ENCODE measurements at regions of chr5 and their contacts with region 1.

Region 1: DNA sequence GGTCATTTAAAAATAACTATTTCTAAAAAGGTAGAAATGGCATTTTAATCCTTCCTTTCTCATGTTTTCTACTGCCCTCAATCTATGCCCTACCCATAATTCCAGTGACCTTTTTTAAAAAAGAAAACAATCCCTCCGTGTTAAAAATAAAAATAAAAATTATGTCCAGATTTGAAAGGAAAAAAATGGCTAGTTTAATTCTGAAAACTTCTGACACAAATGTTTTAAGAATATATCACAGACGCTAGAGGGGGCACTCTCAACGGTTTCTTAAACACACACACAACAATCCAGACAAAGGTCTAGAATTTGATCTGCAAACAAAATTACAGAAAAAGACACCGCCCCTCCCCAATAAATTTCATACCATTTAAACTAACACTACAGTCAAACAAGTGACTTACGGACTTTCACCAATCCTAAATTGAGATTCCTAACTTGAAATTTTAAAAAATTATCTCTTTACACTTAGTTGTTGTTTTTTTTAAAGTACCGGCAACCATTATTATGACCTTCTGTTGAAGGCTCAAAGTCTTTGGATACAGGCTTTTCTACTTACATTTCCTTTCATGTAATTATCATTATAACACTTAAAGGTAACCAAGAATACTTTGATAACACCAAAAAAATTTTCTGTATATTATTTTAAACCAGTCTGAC is 38.2 kb downstream of the CLINT1 start:
- DNase-seq: no peak
- ATAC-seq: peak; percentile 69
- H3K4me3 ChIP-seq: no peak overlapping the region
- H3K27ac ChIP-seq: no peak overlapping the region
- H3K4me1 ChIP-seq: no peaks in the 10 kb centered on the region
- H3K27me3 ChIP-seq: no peaks in the 10 kb centered on the region
- CTCF ChIP-seq: peak; percentile 39 to 56 (median 49); a peak in 5 of 6 replicates
- EP300 ChIP-seq: no peak
- POLR2A ChIP-seq: no peak
- RAD21 ChIP-seq: peak; percentile 63

Region 2: DNA sequence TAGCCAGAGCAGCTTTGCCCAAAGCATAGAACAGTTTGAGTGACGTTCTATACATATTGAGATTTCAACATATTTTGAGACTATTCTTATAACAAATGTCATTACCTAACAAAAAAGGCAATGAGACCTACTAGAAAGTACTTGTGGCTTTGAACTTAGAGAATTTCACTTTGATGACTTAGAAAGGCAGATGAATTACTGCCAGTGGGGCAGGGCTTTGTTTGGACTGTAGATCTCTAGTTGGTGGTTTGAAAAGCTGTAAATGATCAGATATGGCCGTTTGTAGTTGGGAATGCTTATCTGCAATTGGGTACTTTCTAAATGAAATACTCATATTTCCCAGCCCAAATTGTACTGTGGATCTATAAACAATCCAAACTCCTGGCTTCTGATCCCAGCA is 196.6 kb before region 1 on chr5:
- CTCF ChIA-PET with region 1: no interaction called
- POLR2A ChIA-PET with region 1: no interaction called
- RAD21 ChIA-PET with region 1: no interaction called
- SMC1A ChIA-PET with region 1: no interaction called
- in situ Hi-C with region 1: no loop called
- intact Hi-C with region 1: no loop called
- DNase-seq: no peak
- ATAC-seq: no peak; the same call in 2 of the 3 replicates
- H3K4me3 ChIP-seq: no peak overlapping the region
- H3K27ac ChIP-seq: no peak overlapping the region
- H3K4me1 ChIP-seq: no peaks in the 10 kb centered on the region
- H3K27me3 ChIP-seq: no peaks in the 10 kb centered on the region
- CTCF ChIP-seq: no peak
- EP300 ChIP-seq: no peak
- POLR2A ChIP-seq: no peak
- RAD21 ChIP-seq: no peak

Region 3: GRCh38 chr5:157651623-157652549 is 168.8 kb before region 1 on chr5 and contains the start of gene SOX30:
- CTCF ChIA-PET with region 1: no interaction called
- POLR2A ChIA-PET with region 1: no interaction called
- RAD21 ChIA-PET with region 1: no interaction called
- SMC1A ChIA-PET with region 1: no interaction called
- in situ Hi-C with region 1: no loop called
- intact Hi-C with region 1: no loop called
- DNase-seq: peak; percentile 21
- ATAC-seq: peak; percentile 98
- H3K4me3 ChIP-seq: no peak within 1 kb of the TSS; the same call in 1 of the 2 replicates
- H3K27ac ChIP-seq: no peak within 1 kb of the TSS
- H3K4me1 ChIP-seq: no peaks in the 10 kb centered on the region
- H3K27me3 ChIP-seq: no peaks in the 10 kb centered on the region
- CTCF ChIP-seq: peak; percentile 29 to 40 (median 32); a peak in 4 of 6 replicates
- EP300 ChIP-seq: no peak
- POLR2A ChIP-seq: peak; percentile 69
- RAD21 ChIP-seq: peak; percentile 36; the same call in 1 of the 2 replicates
- polyA plus RNA-seq, gene SOX30: 0.06 to 0.07 TPM

Region 4: GRCh38 chr5:157793301-157793700 is 27.4 kb before region 1 on chr5:
- CTCF ChIA-PET with region 1: interaction called, 11 read pairs
- POLR2A ChIA-PET with region 1: no interaction called
- RAD21 ChIA-PET with region 1: no interaction called
- SMC1A ChIA-PET with region 1: interaction called, 3 read pairs
- in situ Hi-C with region 1: no loop called
- intact Hi-C with region 1: no loop called
- DNase-seq: no peak
- ATAC-seq: no peak
- H3K4me3 ChIP-seq: no peak overlapping the region
- H3K27ac ChIP-seq: no peak overlapping the region
- H3K4me1 ChIP-seq: no peaks in the 10 kb centered on the region
- H3K27me3 ChIP-seq: no peaks in the 10 kb centered on the region
- CTCF ChIP-seq: no peak
- EP300 ChIP-seq: no peak
- POLR2A ChIP-seq: no peak
- RAD21 ChIP-seq: no peak

Region 5: DNA sequence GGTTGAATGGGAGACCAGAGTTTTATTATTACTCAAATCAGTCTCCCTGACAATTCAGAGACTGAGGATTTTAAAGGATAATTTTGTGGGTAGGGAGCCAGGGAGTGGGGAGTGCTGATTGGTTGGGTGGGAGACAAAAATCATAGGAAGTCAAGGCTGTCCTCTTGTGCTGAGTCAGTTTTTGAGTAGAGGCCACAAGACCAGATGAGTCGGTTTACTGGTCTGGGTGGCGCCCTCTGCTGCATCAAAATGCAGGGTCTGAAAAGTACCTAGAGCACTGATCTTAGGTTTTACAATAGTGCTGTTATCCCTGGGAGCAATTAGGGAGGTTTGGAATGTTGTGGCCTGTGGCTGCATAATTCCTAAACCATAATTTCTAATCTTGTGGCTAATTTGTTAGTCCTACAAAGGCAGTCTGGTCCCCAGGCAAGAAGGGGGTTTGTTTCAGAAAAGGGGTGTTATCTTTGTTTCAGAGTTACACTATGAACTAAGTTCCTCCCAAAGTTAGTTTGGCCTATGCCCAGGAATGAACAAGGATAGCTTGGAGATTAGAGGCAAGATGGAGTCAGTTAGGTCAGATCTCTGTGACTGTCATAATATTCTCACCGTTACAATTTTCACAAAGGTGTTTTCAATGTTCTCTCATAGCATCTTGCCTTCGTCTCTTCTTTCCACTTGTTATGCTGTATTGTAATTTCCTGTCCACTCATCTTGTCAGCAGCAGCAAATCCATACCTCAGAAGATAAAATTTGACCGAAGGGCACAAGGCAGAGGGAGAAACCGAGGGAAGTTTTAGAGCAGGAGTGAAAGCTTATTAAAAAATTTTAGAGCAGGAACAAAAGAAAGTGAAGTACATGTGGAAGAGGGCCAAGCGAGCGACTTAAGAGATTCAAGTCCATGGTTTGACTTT is 97.4 kb after region 1 on chr5:
- CTCF ChIA-PET with region 1: interaction called, 102 read pairs
- POLR2A ChIA-PET with region 1: no interaction called
- RAD21 ChIA-PET with region 1: interaction called, 11 read pairs
- SMC1A ChIA-PET with region 1: interaction called, 21 read pairs
- in situ Hi-C with region 1: loop called (anchors 5 kb)
- intact Hi-C with region 1: loop called (anchors 1 kb)
- DNase-seq: no peak
- ATAC-seq: peak; percentile 92
- H3K4me3 ChIP-seq: no peak overlapping the region
- H3K27ac ChIP-seq: no peak overlapping the region
- H3K4me1 ChIP-seq: no peaks in the 10 kb centered on the region; the same call in 1 of the 2 replicates
- H3K27me3 ChIP-seq: no peaks in the 10 kb centered on the region
- CTCF ChIP-seq: peak; percentile 64 to 71 (median 65)
- EP300 ChIP-seq: no peak
- POLR2A ChIP-seq: no peak
- RAD21 ChIP-seq: peak; percentile 81

Region 6: GRCh38 chr5:157924931-157925729 is 104.4 kb after region 1 on chr5:
- CTCF ChIA-PET with region 1: interaction called, 102 read pairs
- POLR2A ChIA-PET with region 1: no interaction called
- RAD21 ChIA-PET with region 1: interaction called, 4 read pairs
- SMC1A ChIA-PET with region 1: interaction called, 21 read pairs
- in situ Hi-C with region 1: no loop called
- intact Hi-C with region 1: no loop called
- DNase-seq: no peak
- ATAC-seq: peak; percentile 37
- H3K4me3 ChIP-seq: no peak overlapping the region
- H3K27ac ChIP-seq: no peak overlapping the region
- H3K4me1 ChIP-seq: no peaks in the 10 kb centered on the region
- H3K27me3 ChIP-seq: no peaks in the 10 kb centered on the region
- CTCF ChIP-seq: no peak
- EP300 ChIP-seq: no peak
- POLR2A ChIP-seq: no peak
- RAD21 ChIP-seq: no peak

Region 7: GRCh38 chr5:157994906-157995519 is 174.3 kb after region 1 on chr5:
- CTCF ChIA-PET with region 1: interaction called, 23 read pairs
- POLR2A ChIA-PET with region 1: no interaction called
- RAD21 ChIA-PET with region 1: interaction called, 19 read pairs
- SMC1A ChIA-PET with region 1: interaction called, 38 read pairs
- in situ Hi-C with region 1: no loop called
- intact Hi-C with region 1: loop called (anchors 1 kb)
- DNase-seq: peak; percentile 3
- ATAC-seq: peak; percentile 98
- H3K4me3 ChIP-seq: no peak overlapping the region
- H3K27ac ChIP-seq: no peak overlapping the region
- H3K4me1 ChIP-seq: no peaks in the 10 kb centered on the region
- H3K27me3 ChIP-seq: no peaks in the 10 kb centered on the region
- CTCF ChIP-seq: peak; percentile 75 to 83 (median 82)
- EP300 ChIP-seq: no peak
- POLR2A ChIP-seq: no peak
- RAD21 ChIP-seq: peak; percentile 76

Measured in GM12878 (cell line).